Spleen (tissue), 13 donors: ENCODE measurements at regions of chr5 and their contacts with region 1.

Region 1: DNA sequence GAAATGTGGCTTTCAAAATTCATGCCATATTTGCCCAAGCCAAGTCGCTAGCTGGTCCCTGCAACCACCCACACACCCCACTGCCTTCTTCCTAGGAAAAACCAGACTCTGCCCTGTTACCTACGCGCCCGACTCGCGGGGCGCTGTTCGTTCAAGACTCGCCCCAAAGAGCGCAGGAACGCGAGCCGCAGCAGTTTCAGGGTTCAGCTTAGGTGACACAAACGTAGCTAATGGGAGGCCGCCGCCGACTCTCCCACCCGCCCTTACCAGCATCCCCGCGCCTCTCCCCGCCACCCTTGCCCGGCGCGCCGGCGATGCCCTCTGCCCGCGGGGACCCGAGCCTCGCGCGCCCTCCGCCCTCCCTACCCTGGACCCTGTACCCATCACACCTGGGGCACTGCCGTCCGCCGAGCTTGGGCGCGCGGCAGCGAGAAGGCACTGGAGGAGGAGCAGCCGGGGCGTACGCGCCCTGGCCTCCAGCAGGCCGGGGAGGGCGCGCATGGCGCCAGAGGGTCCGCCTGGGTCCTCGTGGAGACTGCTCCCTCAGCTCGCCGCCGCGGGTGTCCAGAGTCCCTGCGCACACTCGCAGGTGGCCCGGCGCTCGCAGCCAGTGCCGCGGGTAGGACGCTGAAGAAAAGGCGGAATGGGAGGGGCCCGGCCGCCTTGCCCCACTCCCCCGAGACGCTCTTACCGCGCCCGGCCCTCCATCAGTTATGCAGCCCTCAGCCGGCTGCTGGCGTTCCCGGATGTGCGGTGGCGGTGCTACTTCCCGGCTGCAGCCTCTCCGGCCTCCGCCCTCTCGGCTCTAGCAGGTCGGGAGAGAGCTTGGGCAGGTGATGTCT is at the start of gene EMB:
- DNase-seq: peak; percentile 97
- H3K4me3 ChIP-seq: peak within 1 kb of the TSS; percentile 62 to 81 (median 69)
- H3K27ac ChIP-seq: peak within 1 kb of the TSS; percentile 84 to 99 (median 96)
- H3K4me1 ChIP-seq: peaks cover 17 to 82% (median 48%) of the 10 kb centered on the region in 6 donors
- H3K27me3 ChIP-seq: peaks cover 0 to 15% (median 0%) of the 10 kb centered on the region in 7 donors
- CTCF ChIP-seq: peak in 8 of 11 experiments; percentile 4 to 61 (median 42)
- POLR2A ChIP-seq: no peak
- total RNA-seq, gene EMB: 56.2 to 99.9 (median 91.9) TPM

Region 2: DNA sequence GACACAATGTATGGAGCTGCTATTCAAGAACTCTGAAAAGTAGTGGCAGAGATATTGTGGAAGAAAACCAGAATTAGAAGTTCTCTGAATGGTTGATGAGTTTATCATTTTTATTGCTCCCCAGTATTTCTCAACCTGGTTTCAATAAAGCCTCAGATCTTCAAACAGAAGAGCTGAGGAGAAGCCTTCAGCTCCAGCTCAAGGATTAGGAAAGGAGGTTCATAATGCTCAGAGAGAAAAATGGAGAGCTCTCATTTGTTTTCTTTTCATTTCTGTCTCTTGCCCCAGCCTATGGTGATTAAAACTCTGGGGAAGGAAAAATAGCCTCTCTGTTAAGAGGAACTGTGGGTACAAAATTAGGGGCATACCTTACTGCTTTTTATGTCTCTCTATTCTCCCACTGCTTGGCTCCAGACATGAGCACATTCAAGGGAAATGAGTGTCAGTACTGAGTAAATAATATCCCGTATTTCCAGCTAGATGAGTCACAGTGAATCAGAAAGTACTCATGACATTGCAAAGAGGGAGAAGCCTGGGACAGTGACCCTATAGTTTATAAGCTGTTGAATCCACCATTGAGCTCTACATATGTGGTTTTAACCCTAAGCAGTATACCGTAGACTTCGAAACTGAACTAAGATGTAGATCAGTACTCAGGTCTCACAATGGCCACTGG is 137.9 kb before region 1 on chr5:
- intact Hi-C with region 1: no loop called
- DNase-seq: no peak
- H3K4me3 ChIP-seq: no peak overlapping the region
- H3K27ac ChIP-seq: no peak overlapping the region
- H3K4me1 ChIP-seq: peaks cover 0 to 3% (median 0%) of the 10 kb centered on the region in 6 donors
- H3K27me3 ChIP-seq: no peaks in the 10 kb centered on the region
- CTCF ChIP-seq: no peak
- POLR2A ChIP-seq: no peak

Region 3: DNA sequence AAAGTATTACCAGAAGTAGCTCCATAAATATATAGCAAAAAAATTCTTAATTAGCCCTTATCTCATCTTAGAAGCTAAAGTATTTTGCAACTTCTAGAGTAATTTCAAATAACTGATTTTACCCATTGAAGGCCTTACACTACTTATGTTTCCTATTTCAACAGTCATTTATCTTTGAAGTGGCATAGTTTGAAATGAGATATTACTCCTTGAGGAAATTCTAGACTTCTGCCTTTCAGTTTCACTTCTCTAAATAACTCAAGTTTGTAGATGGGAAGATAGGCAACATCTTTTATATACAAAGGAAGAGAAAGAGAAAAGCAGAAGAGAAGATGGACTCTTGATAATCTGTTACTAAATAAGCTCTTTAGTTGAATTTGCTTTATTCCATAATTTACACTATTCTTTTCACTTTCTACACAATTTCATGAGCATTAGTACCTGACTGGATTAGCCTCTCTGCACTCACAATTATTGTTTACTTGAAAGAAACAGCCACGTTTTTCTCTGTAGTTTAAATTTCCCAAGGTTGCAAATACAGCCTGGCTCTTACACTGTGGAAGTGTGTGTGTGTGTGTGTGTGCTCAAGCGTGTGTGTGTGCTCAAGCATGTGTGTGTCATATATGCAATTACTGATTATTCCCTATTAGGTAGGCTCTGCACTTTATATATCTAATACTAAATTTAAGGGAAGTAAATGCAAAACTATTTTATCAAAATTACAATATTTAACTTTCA is 60.8 kb after region 1 on chr5:
- intact Hi-C with region 1: loop called (anchors 10 kb)
- DNase-seq: no peak
- H3K4me3 ChIP-seq: peak overlapping the region in 1 of 8 donors; percentile 28
- H3K27ac ChIP-seq: peak overlapping the region in 5 of 8 donors; percentile 7 to 56 (median 30)
- H3K4me1 ChIP-seq: peaks cover 3 to 20% (median 13%) of the 10 kb centered on the region in 6 donors
- H3K27me3 ChIP-seq: no peaks in the 10 kb centered on the region
- CTCF ChIP-seq: no peak
- POLR2A ChIP-seq: no peak

Region 4: DNA sequence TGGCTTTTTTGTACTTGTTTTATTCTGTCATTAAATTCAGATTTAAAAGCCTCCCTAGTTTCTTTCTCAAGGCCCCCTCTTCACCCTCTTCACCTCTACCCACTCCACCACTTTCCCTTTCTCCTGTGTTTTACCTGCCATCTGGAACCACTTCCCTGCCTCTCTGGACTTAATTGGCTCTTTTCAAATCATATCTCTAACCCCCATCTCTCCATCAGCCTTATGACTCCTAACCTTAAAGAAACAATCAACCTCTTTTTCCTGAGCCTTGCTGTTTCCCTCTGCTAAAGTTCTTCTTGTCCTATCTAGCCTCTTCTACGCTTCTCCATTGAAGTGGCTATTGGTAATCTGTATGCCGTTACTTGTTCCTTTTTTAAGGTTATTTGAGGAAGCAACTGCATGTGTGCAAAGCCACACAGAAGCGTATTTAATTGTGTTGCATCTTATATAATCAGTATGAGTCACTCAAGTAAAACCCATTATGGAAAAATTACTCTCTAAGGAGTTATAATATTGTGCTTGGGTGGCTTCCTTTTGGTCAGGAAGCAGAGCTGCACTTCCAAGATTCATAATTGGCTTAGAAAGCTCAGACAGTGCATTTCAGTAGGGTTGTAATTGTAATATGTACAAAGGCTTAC is 1693.3 kb after region 1 on chr5:
- intact Hi-C with region 1: no loop called
- DNase-seq: no peak
- H3K4me3 ChIP-seq: no peak overlapping the region
- H3K27ac ChIP-seq: no peak overlapping the region
- H3K4me1 ChIP-seq: no peaks in the 10 kb centered on the region
- H3K27me3 ChIP-seq: no peaks in the 10 kb centered on the region
- CTCF ChIP-seq: no peak
- POLR2A ChIP-seq: no peak